Astrocyte of the cerebellum (primary cell): ENCODE measurements at regions of chr11 and their contacts with region 1.

Region 1: DNA sequence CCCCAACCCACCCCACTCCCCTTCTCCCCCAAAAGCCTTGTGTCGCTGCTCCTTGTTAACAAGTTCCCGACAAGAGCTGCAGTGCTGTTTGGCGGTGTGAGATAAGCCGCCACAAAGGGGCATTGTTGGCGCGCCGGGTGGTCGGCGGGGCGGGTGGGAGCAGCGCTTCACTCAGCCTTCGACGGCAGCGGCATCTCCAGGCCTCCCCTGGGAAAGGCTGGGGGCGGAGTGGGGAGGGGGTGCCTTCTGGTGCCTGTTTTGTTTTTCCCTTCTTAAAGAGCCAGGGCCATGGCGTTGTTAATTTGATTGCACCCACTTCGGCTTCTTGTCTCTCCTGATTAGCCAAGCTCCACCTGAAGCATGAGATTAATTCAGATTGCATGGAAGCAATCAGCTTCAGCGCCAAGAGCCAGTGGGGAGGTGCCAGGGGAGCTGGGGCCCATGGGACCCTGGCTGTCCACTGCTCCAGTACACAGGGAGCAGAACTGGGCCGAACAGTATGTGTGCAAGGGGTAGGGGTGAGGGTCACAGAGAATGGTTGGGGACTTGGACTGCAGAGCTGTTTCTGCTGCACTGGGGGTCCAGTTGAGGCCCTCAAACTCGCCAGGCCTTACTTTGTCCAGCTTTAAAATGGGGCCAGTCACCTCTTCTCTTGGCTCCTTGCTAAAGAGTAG is 165.1 kb downstream of the CEP164 start:
- DNase-seq: no peak
- H3K4me3 ChIP-seq: no peak overlapping the region
- CTCF ChIP-seq: no peak

Region 2: GRCh38 chr11:117560780-117561530 is 68.2 kb after region 1 on chr11:
- in situ Hi-C with region 1: loop called (anchors 5 kb)
- DNase-seq: no peak
- H3K4me3 ChIP-seq: no peak overlapping the region
- CTCF ChIP-seq: no peak